ENCODE measurements at regions of chr12 and their contacts with region 1.

Region 1: GRCh38 chr12:104381731-104382480 is 74.8 kb upstream of the CHST11 start:
- DNase-seq: peak; percentile 82 to 86
- ATAC-seq: peak; percentile 92 to 93
- H3K4me3 ChIP-seq: no peak overlapping the region
- H3K27ac ChIP-seq: peak overlapping the region; percentile 31 to 68; a peak in 5 of 6 replicates
- H3K4me1 ChIP-seq: peaks cover 22% of the 10 kb centered on the region
- CTCF ChIP-seq: peak; percentile 96
- EP300 ChIP-seq: no peak
- POLR2A ChIP-seq: no peak
- RAD21 ChIP-seq: peak; percentile 99

Region 2: GRCh38 chr12:104365921-104366415 is 15.9 kb before region 1 on chr12:
- CTCF ChIA-PET with region 1: interaction called, 20 read pairs
- POLR2A ChIA-PET with region 1: no interaction called
- DNase-seq: no peak
- ATAC-seq: no peak
- H3K4me3 ChIP-seq: no peak overlapping the region
- H3K27ac ChIP-seq: no peak overlapping the region
- H3K4me1 ChIP-seq: peaks cover 4% of the 10 kb centered on the region; the same call in 2 of the 3 replicates
- CTCF ChIP-seq: no peak
- EP300 ChIP-seq: no peak
- POLR2A ChIP-seq: no peak
- RAD21 ChIP-seq: no peak

Region 3: DNA sequence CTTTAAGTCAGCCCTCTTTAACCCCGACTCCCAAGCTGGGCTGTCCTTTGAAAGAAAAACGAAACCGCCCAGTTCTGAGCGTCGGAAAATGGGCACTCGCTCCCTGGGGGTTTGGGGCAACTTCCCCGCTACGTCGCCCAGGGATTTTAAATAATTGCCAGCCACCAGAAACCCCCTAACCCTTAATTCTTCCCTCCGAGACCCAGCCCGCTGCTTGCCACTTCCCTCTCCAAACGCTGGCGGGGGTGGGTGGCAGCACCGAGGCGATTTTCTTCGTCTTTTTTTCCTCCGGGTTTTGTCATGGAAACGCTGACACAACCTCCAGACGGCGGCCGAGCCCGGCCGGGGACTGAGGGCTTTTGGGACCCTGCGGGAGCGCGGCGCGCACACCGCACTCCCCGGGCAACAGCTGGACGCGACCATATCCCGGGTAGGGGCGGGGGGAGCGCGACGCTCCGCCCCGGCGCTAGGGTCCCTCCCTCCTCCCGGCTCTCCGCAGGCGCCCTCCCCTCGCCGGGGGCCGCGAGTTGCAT is 74.6 kb after region 1 on chr12 and contains the start of gene CHST11:
- CTCF ChIA-PET with region 1: interaction called, 34 read pairs
- POLR2A ChIA-PET with region 1: interaction called, 3 read pairs
- DNase-seq: peak; percentile 86 to 95
- ATAC-seq: peak; percentile 80 to 83
- H3K4me3 ChIP-seq: peak within 1 kb of the TSS; percentile 87
- H3K27ac ChIP-seq: peak within 1 kb of the TSS; percentile 91 to 96
- H3K4me1 ChIP-seq: peaks cover 33% of the 10 kb centered on the region
- CTCF ChIP-seq: no peak
- EP300 ChIP-seq: 0 out of 5 replicates have a peak, but pooled peaks of 1 of the 2 experiments have one; percentile 15
- POLR2A ChIP-seq: no peak
- RAD21 ChIP-seq: peak in 1 of 2 experiments; percentile 28; a peak in 1 of 5 replicates
- polyA plus RNA-seq, gene CHST11: 21.8 and 24.0 TPM in 2 replicates

Region 4: DNA sequence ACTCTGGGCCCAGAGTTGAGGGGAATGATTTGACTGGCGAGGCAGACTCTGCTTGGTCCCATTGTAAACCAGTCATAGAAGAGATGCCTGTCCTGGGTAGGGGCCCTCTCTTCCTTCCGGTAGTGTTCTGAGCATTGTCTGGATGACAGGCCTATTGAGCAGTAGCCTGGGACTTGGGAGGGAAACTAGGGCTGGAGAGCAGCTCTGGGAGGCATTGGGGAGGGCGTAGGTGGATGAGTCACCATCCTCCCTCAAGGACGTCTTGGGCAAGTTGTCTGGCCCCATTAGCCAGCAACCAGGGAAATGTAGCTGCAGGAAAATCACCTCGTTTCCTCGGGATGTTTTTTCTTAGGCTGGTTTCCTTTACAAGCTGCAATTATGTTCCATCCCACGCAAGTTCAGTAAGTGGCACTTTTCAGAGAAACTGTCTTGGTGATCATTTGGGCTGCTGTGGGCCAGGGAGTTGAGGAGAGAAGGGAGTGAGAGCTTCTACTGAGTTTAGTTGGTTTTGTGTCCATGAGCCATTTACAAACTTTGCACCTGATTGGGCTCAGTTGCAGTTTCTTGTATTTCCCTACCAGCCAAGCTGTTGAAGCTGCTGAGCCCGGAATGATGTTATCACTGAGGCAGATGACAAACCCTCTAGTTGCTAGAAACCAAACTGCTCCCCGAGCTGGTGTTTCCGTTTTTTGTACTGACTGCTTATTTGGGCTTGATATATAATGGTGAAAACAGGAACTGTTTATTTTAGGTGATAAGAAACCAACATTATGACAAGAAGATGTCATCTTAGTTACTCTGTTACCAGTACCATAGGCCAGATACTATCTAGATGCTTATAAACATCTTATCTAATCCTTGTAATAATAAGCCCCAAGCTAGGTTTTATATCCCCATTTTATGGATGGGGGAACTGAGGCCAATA is 222.4 kb after region 1 on chr12:
- CTCF ChIA-PET with region 1: interaction called, 11 read pairs
- POLR2A ChIA-PET with region 1: no interaction called
- DNase-seq: peak; percentile 94 to 95
- ATAC-seq: peak; percentile 89 to 94
- H3K4me3 ChIP-seq: peak overlapping the region; percentile 16; the same call in 1 of the 3 replicates
- H3K27ac ChIP-seq: peak overlapping the region; percentile 89 to 91
- H3K4me1 ChIP-seq: peaks cover 70% of the 10 kb centered on the region
- CTCF ChIP-seq: no peak
- EP300 ChIP-seq: no peak; a peak in 1 of 5 replicates
- POLR2A ChIP-seq: no peak
- RAD21 ChIP-seq: peak; percentile 3 to 24; a peak in 3 of 5 replicates

Region 5: DNA sequence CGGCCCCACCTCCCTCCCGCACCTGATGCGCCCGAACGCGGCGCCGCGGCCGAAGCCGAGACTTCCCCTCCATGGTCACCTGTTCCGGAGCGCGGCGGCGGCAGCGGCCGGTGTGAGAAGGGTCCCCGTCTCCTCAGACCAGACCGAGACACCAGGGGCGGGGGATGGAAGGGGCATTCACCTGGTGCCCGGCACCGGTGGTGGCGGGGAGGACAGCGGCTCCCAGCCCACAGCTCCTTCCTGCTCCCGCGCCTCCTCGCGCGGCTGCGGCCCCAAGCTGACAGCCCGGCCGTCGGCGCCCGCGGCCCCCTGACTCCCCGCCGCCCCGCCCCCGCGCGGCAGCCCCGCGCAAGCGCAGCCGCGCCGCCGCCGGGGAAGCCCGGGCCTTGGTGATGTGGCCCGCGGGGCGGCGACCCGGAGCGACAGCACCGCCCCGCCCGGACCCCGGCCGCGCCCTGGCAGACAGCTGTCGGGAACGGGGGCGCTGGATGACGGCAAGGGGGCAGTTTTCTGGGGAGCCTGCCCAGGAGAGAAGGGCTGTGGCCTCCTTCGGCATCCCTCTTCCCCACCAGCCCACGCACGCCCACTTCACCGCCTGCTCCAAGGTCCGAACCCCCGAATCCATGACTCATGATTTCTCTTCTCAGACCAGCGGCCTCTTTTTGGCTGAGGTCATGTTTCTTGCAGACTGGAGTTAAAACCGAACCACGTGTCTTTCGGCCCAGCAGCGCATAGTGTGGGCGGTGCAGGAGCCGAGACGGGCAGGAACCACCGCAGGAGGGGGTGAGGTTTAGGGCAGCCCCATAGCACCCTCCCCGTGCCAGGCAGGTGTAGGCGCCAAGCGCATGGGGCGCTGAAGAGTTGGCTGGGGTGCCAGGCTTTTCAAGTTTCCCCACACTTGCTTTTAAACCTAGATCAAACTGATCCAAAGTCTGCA is 576.4 kb after region 1 on chr12 and contains the start of gene SLC41A2:
- CTCF ChIA-PET with region 1: interaction called, 15 read pairs
- POLR2A ChIA-PET with region 1: no interaction called
- DNase-seq: peak; percentile 93 to 96
- ATAC-seq: peak; percentile 89 to 94
- H3K4me3 ChIP-seq: peak within 1 kb of the TSS; percentile 95
- H3K27ac ChIP-seq: peak within 1 kb of the TSS; percentile 92 to 98
- H3K4me1 ChIP-seq: peaks cover 36% of the 10 kb centered on the region
- CTCF ChIP-seq: no peak; the same call in none of the 3 replicates
- EP300 ChIP-seq: no peak
- POLR2A ChIP-seq: peak; percentile 77
- RAD21 ChIP-seq: peak in 1 of 2 experiments; percentile 8; a peak in 2 of 5 replicates
- polyA plus RNA-seq, gene SLC41A2: 14.6 and 17.5 TPM in 2 replicates

Region 6: DNA sequence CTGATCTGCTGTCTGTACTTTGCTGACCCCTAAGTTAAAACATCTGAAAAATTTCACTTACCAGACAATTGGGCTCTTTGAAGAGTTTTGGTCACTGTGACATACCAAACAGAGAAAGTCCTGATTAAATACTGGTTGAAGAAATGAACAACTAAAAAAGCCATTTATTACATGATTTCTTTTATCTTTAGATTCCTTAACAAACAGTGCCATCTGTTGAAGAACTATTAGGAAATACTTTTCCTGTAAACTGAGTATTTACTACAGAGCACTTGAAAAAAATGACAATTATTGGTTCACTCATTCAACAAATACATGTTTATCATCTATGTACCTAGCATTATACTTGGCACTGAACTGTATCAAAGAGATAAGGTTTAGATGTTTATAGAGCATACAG is 719.1 kb after region 1 on chr12:
- CTCF ChIA-PET with region 1: interaction called, 15 read pairs
- POLR2A ChIA-PET with region 1: no interaction called
- DNase-seq: no peak
- ATAC-seq: peak; percentile 68 to 74; a peak in 5 of 6 replicates
- H3K4me3 ChIP-seq: no peak overlapping the region
- H3K27ac ChIP-seq: no peak overlapping the region
- H3K4me1 ChIP-seq: peaks cover 14% of the 10 kb centered on the region
- CTCF ChIP-seq: peak; percentile 54
- EP300 ChIP-seq: no peak
- POLR2A ChIP-seq: no peak
- RAD21 ChIP-seq: peak; percentile 71 to 77